MCF 10A (cell line): ENCODE measurements at regions of chr10 and their contacts with region 1.

Region 1: DNA sequence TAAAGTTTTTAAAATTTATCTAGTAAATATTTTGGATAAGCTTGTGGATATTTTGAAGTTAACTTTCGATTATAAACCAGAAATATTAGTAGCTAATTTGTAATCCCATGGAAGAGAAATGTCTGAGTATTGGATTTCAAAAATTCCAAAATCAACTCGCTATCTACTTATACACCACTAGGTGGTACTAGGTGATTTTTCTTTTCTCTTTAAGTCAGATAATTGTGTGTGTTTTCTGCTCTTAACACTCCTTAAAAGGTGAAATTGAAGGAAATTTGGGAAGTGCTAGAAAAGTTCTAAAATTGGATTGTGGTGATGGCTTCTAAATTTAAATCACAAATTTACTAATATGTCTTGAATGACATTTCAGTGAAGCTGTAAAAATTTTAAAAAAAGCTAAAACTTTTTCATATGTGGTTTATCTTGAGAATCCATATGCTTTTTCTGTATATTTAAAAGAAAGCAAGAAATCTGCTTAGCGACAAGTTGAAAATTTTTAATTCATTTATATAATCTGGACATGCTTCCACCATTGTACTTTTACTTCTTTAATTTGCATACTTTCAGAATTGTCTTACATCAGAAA is 90.2 kb downstream of the IPMK start:
- DNase-seq: peak; percentile 38
- H3K4me3 Mint-ChIP-seq: no peak overlapping the region
- H3K27ac Mint-ChIP-seq: no peak overlapping the region
- H3K4me1 Mint-ChIP-seq: peaks cover 20% of the 10 kb centered on the region
- H3K27me3 Mint-ChIP-seq: peaks cover 7% of the 10 kb centered on the region
- CTCF ChIP-seq: peak; percentile 53

Region 2: DNA sequence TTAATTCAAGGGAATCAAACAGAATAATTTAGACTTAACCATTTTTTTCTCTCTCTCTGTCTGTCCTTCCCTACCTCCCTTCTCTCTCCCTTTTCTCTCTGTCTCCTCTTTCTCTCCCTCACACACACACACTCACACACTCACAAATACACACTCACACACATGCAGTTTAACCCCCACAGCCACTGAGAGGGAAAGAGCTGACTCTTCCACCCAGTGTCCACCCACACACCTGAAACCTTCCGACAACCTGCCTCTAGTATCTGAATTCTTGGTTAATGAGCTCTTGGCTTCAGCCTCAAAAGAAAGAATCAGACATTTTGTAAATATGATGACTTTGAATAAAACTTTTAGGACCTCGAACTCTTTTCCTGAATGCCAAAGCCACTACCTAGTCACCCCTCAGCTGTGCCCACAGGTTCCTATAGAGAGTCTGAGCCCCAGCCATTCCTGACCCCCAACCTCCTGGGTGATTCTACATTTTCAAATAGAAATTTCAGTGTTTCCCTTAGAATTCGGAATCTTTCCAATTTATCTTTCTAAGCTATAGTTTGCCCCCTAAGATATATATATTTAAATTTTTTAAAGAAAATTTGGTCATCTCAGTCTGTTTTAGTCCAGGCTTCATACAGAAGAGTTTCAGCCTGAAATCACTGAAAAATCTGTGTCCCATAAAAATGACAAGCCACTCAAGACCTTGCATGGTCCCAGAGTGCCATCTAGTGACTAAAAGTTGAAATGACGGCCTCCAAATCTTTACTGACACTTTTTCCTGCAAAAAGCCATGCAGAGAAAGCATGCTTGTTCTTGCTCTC is 112.5 kb before region 1 on chr10:
- CTCF ChIA-PET with region 1: no interaction called
- POLR2A ChIA-PET with region 1: no interaction called
- intact Hi-C with region 1: no loop called
- DNase-seq: peak; percentile 62
- H3K4me3 Mint-ChIP-seq: no peak overlapping the region
- H3K27ac Mint-ChIP-seq: peak overlapping the region; percentile 30
- H3K4me1 Mint-ChIP-seq: peaks cover 6% of the 10 kb centered on the region
- H3K27me3 Mint-ChIP-seq: no peaks in the 10 kb centered on the region
- CTCF ChIP-seq: peak; percentile 90

Region 3: DNA sequence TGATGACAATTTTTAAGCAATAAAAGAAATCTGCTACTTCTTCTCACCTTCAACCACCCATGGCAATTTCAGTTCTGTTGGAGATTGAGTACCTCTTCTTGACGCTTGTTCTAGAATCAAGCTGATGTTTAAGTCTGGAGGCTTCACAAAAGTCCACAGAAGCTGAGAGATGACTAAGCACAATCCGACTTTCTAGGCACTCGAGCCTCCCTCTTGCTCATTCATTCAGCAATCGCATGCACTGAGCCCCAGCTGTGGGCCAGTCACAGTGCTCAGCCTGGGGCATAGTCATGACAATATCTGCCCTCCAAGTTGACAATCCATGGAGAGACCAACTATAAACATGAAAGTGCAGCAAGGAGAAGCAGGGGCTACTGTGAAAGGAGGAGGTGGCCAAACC is 12.9 kb before region 1 on chr10:
- CTCF ChIA-PET with region 1: interaction called, 20 read pairs
- POLR2A ChIA-PET with region 1: no interaction called
- intact Hi-C with region 1: no loop called
- DNase-seq: no peak
- H3K4me3 Mint-ChIP-seq: no peak overlapping the region
- H3K27ac Mint-ChIP-seq: no peak overlapping the region
- H3K4me1 Mint-ChIP-seq: no peaks in the 10 kb centered on the region
- H3K27me3 Mint-ChIP-seq: peaks cover 6% of the 10 kb centered on the region
- CTCF ChIP-seq: no peak

Region 4: GRCh38 chr10:58237014-58237830 is 59.8 kb after region 1 on chr10:
- CTCF ChIA-PET with region 1: interaction called, 4 read pairs
- POLR2A ChIA-PET with region 1: interaction called, 9 read pairs
- intact Hi-C with region 1: loop called (anchors 1 kb)
- DNase-seq: peak; percentile 78
- H3K4me3 Mint-ChIP-seq: peak overlapping the region; percentile 22
- H3K27ac Mint-ChIP-seq: peak overlapping the region; percentile 82
- H3K4me1 Mint-ChIP-seq: peaks cover 30% of the 10 kb centered on the region
- H3K27me3 Mint-ChIP-seq: no peaks in the 10 kb centered on the region
- CTCF ChIP-seq: no peak

Region 5: GRCh38 chr10:58280982-58281752 is 103.7 kb after region 1 on chr10:
- CTCF ChIA-PET with region 1: interaction called, 15 read pairs
- POLR2A ChIA-PET with region 1: no interaction called
- intact Hi-C with region 1: no loop called
- DNase-seq: no peak
- H3K4me3 Mint-ChIP-seq: no peak overlapping the region
- H3K27ac Mint-ChIP-seq: peak overlapping the region; percentile 47
- H3K4me1 Mint-ChIP-seq: peaks cover 17% of the 10 kb centered on the region
- H3K27me3 Mint-ChIP-seq: no peaks in the 10 kb centered on the region
- CTCF ChIP-seq: no peak

Region 6: GRCh38 chr10:58299580-58299979 is 122.1 kb after region 1 on chr10:
- CTCF ChIA-PET with region 1: interaction called, 198 read pairs
- POLR2A ChIA-PET with region 1: interaction called, 10 read pairs
- intact Hi-C with region 1: no loop called
- DNase-seq: peak; percentile 80
- H3K4me3 Mint-ChIP-seq: no peak overlapping the region
- H3K27ac Mint-ChIP-seq: no peak overlapping the region
- H3K4me1 Mint-ChIP-seq: no peaks in the 10 kb centered on the region
- H3K27me3 Mint-ChIP-seq: peaks cover 40% of the 10 kb centered on the region
- CTCF ChIP-seq: peak; percentile 76

Region 7: DNA sequence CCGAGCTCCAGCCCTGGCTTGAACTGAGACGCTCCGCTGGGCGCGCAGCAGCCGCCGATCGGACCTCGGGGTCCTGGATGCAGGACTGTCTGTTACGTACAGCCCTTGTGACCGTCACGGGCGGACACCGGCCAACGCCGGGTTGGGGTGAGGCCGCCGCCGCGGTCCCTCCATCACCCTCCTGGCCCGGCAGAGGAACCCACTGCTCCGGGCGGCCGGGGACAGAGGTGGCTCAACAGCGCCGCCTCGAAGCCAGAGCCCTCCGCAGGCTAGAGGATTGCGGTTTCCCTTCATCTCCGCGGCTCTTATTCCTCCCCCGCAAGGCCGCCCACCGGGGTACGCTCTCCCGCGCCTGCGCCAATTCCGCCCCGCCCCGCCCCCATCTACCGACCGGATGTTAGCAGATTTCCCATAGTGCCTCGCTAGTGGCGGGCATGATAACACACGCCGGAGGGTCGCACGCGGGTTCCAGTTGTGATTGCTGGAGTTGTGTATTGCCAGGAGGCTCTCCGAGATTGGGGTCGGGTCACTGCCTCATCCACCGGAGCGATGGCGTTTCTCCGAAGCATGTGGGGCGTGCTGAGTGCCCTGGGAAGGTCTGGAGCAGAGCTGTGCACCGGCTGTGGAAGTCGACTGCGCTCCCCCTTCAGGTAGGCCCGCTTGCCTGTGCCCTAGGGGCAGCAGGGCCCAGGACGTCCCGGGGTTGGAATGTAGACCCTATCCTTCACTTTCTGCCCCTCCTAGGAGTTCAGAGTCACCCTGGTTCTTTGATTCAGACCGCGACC is 207.7 kb after region 1 on chr10 and contains the start of gene TFAM:
- CTCF ChIA-PET with region 1: interaction called, 4 read pairs
- POLR2A ChIA-PET with region 1: interaction called, 5 read pairs
- intact Hi-C with region 1: loop called (anchors 5 kb)
- DNase-seq: peak; percentile 93
- H3K4me3 Mint-ChIP-seq: peak within 1 kb of the TSS; percentile 86
- H3K27ac Mint-ChIP-seq: peak within 1 kb of the TSS; percentile 86
- H3K4me1 Mint-ChIP-seq: peaks cover 9% of the 10 kb centered on the region
- H3K27me3 Mint-ChIP-seq: no peaks in the 10 kb centered on the region
- CTCF ChIP-seq: peak; percentile 37
- total RNA-seq, gene TFAM: 44.4 and 62.3 TPM in 2 replicates